Activated B cell treated with CpG ODN at 0.5 μM for 24 hours (primary cell): ENCODE measurements at regions of chr18 and their contacts with region 1.

Region 1: DNA sequence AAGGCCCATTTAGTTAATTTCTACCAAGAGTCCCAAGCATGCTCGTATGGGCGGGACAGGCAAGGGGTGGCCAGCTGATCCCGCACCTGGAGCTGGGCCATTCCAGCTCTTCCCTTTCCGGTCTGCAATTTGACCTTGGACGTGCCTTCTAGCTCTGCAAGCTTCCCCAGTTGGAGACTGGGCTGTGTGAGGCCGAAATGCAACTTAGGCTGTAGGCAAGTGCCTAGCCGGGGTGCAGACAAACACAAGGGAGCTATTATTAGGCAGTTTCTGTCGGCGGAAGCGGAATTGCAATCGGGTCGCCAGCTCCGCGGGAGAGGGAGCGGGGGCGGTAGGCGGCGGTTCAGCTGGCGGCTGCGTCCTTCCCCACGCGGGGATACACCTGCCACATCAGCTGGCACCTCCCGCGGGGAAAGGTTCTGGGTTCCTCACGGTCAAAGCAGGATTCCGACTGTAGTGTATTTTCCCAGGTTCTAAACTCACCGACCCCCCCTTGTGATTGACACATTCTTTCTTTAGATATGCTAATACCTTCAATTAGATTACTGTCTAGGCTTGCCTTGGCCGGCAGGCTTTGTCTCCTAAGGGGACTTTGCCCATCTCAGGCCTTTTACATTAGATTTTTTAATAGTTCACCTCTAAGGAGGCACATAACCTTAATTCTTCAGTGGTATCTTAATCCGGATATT is 17.1 kb upstream of the ZNF532 start:
- DNase-seq: peak; percentile 34
- ATAC-seq: peak; percentile 58
- H3K4me3 Mint-ChIP-seq: peak overlapping the region; percentile 81
- H3K27ac Mint-ChIP-seq: peak overlapping the region; percentile 25
- H3K4me1 Mint-ChIP-seq: peaks cover 20% of the 10 kb centered on the region
- H3K27me3 Mint-ChIP-seq: peaks cover 7% of the 10 kb centered on the region
- CTCF ChIP-seq: no peak

Region 2: DNA sequence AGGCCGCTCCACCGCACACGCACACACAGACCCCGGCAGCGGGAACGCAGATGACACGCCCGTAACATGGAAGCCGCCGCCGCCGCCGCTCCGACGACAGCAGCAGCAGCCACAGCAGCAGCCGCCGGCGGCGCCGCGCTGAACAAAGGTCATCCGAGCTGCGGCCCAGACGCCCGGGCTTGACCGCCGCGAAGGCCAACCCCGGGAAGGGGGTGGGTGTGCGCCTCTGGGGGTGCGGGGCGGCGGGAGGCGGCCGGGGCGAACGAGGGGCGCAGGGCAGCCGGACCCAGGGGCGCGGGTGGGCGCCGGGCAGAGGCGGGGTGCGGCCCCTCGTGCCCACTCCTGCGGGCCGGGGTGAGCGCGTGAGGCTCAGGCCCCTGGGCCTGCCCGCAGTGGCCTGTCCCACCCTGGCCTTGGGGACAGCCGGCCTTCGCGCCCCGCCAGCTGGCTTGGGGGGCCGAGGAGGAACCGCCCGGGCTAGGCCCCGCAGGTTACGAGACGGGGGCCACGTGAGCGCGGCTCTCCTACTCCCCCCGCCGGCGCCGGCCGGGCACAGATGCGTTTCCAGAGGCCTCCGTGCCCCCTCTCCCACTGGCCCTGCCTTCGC is 16.1 kb after region 1 on chr18:
- CTCF ChIA-PET with region 1: no interaction called
- POLR2A ChIA-PET with region 1: interaction called, 9 read pairs
- intact Hi-C with region 1: loop called (anchors 2 kb)
- DNase-seq: peak; percentile 61
- ATAC-seq: peak; percentile 66
- H3K4me3 Mint-ChIP-seq: peak overlapping the region; percentile 76
- H3K27ac Mint-ChIP-seq: peak overlapping the region; percentile 85
- H3K4me1 Mint-ChIP-seq: peaks cover 32% of the 10 kb centered on the region
- H3K27me3 Mint-ChIP-seq: no peaks in the 10 kb centered on the region
- CTCF ChIP-seq: no peak

Region 3: GRCh38 chr18:59029663-59030429 is 182.3 kb after region 1 on chr18:
- CTCF ChIA-PET with region 1: no interaction called
- POLR2A ChIA-PET with region 1: no interaction called
- intact Hi-C with region 1: no loop called
- DNase-seq: no peak
- ATAC-seq: no peak
- H3K4me3 Mint-ChIP-seq: no peak overlapping the region
- H3K27ac Mint-ChIP-seq: no peak overlapping the region
- H3K4me1 Mint-ChIP-seq: peaks cover 3% of the 10 kb centered on the region
- H3K27me3 Mint-ChIP-seq: no peaks in the 10 kb centered on the region
- CTCF ChIP-seq: no peak